ENCODE measurements at regions of chr14 and their contacts with region 1.

Region 1: DNA sequence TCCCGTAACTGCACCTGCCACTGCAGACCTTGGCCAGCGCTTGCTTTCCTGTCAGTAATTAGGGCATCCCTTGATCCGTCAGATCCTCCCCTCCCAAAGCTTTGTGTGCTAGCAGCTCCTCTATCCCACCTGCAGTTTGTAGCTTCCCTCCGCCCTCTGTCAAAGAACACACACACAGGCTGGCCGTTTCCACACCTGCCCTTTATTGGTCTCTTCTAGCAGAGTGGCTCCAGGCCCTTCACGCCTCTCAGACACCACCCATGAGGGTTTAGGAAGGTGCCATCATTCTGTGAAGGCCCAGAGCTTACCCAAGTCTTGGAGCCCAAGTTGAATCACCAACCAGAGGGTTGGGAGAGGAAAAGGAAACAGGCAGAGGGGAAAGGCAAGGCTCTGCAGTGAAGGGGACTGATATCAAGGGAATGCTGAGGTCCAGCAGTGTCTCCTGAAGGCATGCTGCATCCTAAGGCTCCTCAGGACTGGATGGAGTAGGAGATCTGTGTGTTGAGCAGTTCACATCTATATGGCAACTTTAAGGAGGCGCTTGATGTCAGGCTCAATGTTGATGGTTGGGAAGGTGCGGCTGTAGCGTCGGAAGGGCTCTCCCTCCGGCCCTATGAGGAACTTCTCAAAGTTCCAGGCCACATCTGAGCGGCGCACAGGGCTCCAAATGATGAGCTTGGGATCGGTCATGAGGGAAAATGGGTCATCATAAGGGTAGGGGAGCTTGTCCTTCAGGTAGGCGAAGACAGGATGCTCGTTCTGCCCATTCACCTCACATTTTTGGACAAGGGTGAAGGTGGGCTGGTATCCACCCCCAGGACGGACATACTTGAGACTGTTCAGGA is 3.4 kb downstream of the GPX2 start:
- DNase-seq: no peak
- H3K4me3 ChIP-seq: no peak overlapping the region
- H3K27ac ChIP-seq: no peak overlapping the region
- H3K27me3 ChIP-seq: no peaks in the 10 kb centered on the region
- CTCF ChIP-seq: no peak

Region 2: GRCh38 chr14:64786296-64787149 is 152.7 kb before region 1 on chr14:
- CTCF ChIA-PET with region 1: no interaction called
- POLR2A ChIA-PET with region 1: no interaction called
- DNase-seq: no peak
- H3K4me3 ChIP-seq: no peak overlapping the region
- H3K27ac ChIP-seq: no peak overlapping the region
- H3K27me3 ChIP-seq: peaks cover 11% of the 10 kb centered on the region
- CTCF ChIP-seq: no peak

Region 3: DNA sequence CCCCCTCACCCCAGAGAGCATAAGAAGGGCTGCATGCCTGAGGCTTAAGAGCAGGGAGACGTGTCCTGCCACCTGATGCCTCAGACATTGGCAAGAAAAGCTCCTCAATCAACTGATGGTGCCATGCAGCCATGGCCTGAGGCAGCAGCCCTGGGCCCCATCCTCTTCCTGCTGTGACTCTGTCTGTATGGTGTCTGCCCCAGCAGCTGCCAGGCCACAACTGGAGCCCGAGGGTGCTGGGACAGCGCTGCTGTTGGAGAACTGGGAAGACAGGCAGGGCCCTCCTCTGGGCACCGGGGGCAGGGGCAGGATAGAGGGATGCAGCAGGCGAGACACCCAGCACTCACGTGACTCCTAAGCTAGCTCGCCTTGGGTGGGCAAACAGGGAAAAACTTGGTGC is 20.7 kb after region 1 on chr14:
- CTCF ChIA-PET with region 1: interaction called, 11 read pairs
- POLR2A ChIA-PET with region 1: no interaction called
- DNase-seq: no peak
- H3K4me3 ChIP-seq: no peak overlapping the region
- H3K27ac ChIP-seq: no peak overlapping the region
- H3K27me3 ChIP-seq: no peaks in the 10 kb centered on the region
- CTCF ChIP-seq: no peak